Endothelial cell of umbilical vein (primary cell): ENCODE measurements at regions of chr5 and their contacts with region 1.

Region 1: DNA sequence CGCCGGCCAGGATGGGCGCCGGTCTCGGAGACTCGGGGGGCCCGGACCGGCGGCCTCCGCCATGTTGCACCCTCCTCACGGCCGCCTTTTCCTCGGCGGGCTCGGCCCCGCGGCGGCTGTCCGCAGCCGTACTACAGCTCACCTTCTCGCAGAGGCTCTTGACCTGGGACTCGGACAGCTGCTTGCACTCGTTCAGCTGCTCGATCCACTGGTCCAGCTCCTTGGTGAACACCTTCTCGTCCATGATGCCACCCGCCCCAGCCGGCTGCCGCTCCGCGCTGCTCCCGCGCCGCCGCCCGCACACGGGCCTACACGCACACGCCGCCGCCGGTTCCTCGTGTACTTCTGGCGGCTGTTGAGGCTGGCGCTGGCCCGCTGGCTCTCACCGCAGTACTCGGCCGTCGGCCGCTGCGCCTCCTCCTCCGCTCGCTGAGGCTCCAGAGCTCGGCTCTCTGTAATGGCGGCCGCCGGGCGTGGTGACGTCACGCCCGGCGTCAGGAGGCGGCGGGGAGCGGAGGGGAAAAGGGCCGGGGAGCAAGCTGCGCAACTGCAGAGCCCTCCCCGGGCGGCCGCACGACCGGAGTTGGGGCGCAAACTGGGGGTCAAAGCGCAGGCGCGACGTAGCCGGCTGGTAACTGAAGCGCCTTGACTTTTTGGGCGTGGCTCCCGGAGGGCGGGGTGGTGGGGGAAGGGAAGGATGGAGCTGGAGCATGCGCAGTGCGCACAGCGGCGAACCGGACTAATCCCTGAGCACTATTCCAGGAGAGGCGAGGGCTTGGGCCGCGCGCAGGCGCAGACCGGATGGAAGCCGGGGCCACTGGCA is at the start of gene PPP2CA:
- DNase-seq: peak; percentile 100
- H3K4me3 ChIP-seq: peak within 1 kb of the TSS; percentile 63 to 91 (median 84)
- H3K27ac ChIP-seq: peak within 1 kb of the TSS; percentile 96
- H3K4me1 ChIP-seq: peaks cover 29% of the 10 kb centered on the region
- H3K27me3 ChIP-seq: no peaks in the 10 kb centered on the region
- CTCF ChIP-seq: peak in 1 of 2 donors; percentile 5
- POLR2A ChIP-seq: peak; percentile 18
- total RNA-seq, gene PPP2CA: 163 and 183 TPM in 2 replicates

Region 2: GRCh38 chr5:134176511-134177368 is 49.1 kb before region 1 on chr5 and contains the start of gene SKP1:
- CTCF ChIA-PET with region 1: interaction called, 3 read pairs
- POLR2A ChIA-PET with region 1: interaction called, 15 read pairs
- dilution Hi-C with region 1: no loop called
- intact Hi-C with region 1: loop called (anchors 1 kb)
- DNase-seq: peak; percentile 86
- H3K4me3 ChIP-seq: peak within 1 kb of the TSS; percentile 91 to 99 (median 98)
- H3K27ac ChIP-seq: peak within 1 kb of the TSS; percentile 85
- H3K4me1 ChIP-seq: peaks cover 18% of the 10 kb centered on the region
- H3K27me3 ChIP-seq: no peaks in the 10 kb centered on the region
- CTCF ChIP-seq: no peak
- POLR2A ChIP-seq: peak; percentile 99
- total RNA-seq, gene SKP1: 311 and 320 TPM in 2 replicates

Region 3: DNA sequence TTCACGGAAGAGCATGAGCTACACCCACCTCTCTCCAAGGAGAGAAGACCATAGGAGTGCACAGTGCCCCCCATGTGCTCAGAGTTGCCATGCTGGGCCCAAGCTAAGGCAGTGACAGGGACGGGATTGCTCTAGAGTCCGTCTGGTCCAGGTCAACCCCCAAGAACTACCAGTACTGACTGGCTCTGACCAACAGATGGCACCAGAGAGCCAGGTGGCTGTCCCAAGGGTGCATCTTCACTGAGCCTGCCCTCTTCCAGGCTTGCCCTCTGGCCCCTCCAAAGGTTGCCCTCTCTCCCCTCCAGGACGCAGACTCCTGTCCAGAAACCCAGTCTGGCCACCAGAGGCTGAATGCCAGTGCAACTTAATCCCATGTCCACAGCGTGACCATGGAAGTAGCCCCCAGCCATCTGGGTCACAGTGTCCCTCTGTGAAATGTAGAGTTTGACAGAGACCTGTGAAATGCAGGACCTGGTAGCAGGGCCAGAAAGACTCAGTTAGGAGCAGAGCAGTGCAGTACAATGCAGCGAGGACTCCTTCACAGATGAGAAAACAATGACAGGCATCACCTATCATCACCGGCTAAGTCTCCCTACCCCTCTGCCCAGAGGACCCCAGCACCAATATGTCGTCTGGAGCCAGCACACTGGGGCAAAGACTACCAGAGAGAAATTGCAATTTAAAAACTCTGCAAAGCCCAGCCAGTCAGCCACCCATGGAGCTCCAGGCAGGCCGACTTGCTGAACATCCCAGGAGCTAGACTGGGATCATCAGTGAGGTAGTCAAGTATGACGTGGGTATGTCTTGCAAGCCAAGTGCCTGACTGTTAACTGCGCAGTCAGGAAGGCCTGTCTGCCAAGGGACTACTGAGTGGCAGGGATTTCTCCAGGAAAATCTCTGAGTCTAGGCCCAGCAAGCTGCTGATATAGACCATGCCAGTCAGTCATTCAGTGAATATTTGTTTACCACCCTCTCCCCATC is 41.4 kb before region 1 on chr5:
- CTCF ChIA-PET with region 1: interaction called, 11 read pairs
- POLR2A ChIA-PET with region 1: interaction called, 5 read pairs
- dilution Hi-C with region 1: no loop called
- intact Hi-C with region 1: no loop called
- DNase-seq: peak; percentile 55
- H3K4me3 ChIP-seq: no peak overlapping the region
- H3K27ac ChIP-seq: no peak overlapping the region
- H3K4me1 ChIP-seq: no peaks in the 10 kb centered on the region
- H3K27me3 ChIP-seq: no peaks in the 10 kb centered on the region
- CTCF ChIP-seq: peak; percentile 76 to 94
- POLR2A ChIP-seq: no peak

Region 4: GRCh38 chr5:134240421-134240962 is 14.7 kb after region 1 on chr5:
- CTCF ChIA-PET with region 1: interaction called, 5 read pairs
- POLR2A ChIA-PET with region 1: no interaction called
- dilution Hi-C with region 1: no loop called
- intact Hi-C with region 1: loop called (anchors 2 kb)
- DNase-seq: no peak
- H3K4me3 ChIP-seq: no peak overlapping the region
- H3K27ac ChIP-seq: no peak overlapping the region
- H3K4me1 ChIP-seq: no peaks in the 10 kb centered on the region
- H3K27me3 ChIP-seq: peaks cover 5 to 12% of the 10 kb centered on the region in 2 experiments
- CTCF ChIP-seq: no peak
- POLR2A ChIP-seq: no peak

Region 5: GRCh38 chr5:134648425-134649162 is 422.8 kb after region 1 on chr5 and contains the start of gene SEC24A:
- CTCF ChIA-PET with region 1: no interaction called
- POLR2A ChIA-PET with region 1: no interaction called
- dilution Hi-C with region 1: no loop called
- intact Hi-C with region 1: loop called (anchors 1 kb)
- DNase-seq: peak; percentile 93
- H3K4me3 ChIP-seq: peak within 1 kb of the TSS; percentile 60 to 91 (median 73)
- H3K27ac ChIP-seq: peak within 1 kb of the TSS; percentile 94
- H3K4me1 ChIP-seq: peaks cover 9% of the 10 kb centered on the region
- H3K27me3 ChIP-seq: no peaks in the 10 kb centered on the region
- CTCF ChIP-seq: no peak
- POLR2A ChIP-seq: peak; percentile 91
- total RNA-seq, gene SEC24A: 28.6 and 30.0 TPM in 2 replicates